ENCODE measurements at regions of chr1 and their contacts with region 1.

Region 1: DNA sequence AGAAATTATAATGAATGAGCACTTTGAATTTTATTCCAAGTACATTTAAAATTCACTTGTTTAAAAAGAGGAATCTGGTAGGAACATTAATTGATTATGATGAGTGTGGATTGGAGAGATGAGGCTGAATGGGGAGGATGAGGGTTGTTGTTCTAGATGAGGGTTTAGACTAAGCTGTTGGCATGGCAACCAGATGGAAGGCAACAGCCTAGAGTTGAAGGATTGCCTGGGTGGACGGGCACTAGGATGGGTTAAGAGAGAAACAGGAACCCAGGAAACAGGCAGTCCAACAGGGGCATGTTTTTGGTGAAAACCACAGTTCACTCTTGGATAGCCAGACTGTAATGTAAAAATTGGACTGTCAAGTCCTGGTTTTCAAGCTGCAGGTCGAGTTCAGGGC is 125.5 kb downstream of the CHRM3 start:
- DNase-seq: no peak
- H3K4me3 ChIP-seq: no peak overlapping the region
- H3K27ac ChIP-seq: peak overlapping the region in 1 of 2 donors; percentile 23
- H3K4me1 ChIP-seq: peaks cover 1% of the 10 kb centered on the region
- H3K27me3 ChIP-seq: no peaks in the 10 kb centered on the region
- CTCF ChIP-seq: no peak
- EP300 ChIP-seq: no peak
- POLR2A ChIP-seq: no peak

Region 2: GRCh38 chr1:239040523-239040922 is 471.3 kb before region 1 on chr1:
- intact Hi-C with region 1: loop called in 1 of 4 experiments (anchors 10 kb)
- DNase-seq: no peak
- H3K4me3 ChIP-seq: no peak overlapping the region
- H3K27ac ChIP-seq: no peak overlapping the region
- H3K4me1 ChIP-seq: no peaks in the 10 kb centered on the region
- H3K27me3 ChIP-seq: no peaks in the 10 kb centered on the region
- CTCF ChIP-seq: no peak
- EP300 ChIP-seq: no peak
- POLR2A ChIP-seq: no peak

Region 3: DNA sequence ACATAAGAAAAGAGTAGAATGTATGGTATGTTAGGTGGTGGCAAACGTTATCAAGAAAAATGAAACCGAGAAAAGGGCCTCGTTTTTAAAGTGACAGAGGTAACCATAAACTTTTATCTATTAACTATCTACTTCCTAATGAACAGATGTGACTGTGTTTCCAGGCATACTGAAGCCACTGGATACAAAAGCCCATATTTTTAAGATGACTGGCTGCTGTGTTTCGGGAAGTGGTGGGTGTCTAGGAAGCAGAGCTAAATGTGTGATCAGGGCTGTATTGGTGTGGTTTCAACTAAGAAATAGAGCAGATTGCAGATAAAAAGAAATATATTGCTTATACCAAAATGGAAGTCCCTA is 53.7 kb before region 1 on chr1:
- intact Hi-C with region 1: no loop called
- DNase-seq: no peak
- H3K4me3 ChIP-seq: no peak overlapping the region
- H3K27ac ChIP-seq: no peak overlapping the region
- H3K4me1 ChIP-seq: no peaks in the 10 kb centered on the region
- H3K27me3 ChIP-seq: no peaks in the 10 kb centered on the region
- CTCF ChIP-seq: no peak
- EP300 ChIP-seq: no peak
- POLR2A ChIP-seq: no peak